CD8-positive, alpha-beta T cell (primary cell): ENCODE measurements at regions of chr19 and their contacts with region 1.

Region 1: GRCh38 chr19:36772311-36773222 is at the start of gene ZNF850:
- DNase-seq: peak; percentile 86 to 97 (median 95)
- ATAC-seq: peak; percentile 90
- H3K4me3 ChIP-seq: peak within 1 kb of the TSS; percentile 77 to 100
- H3K4me3 Mint-ChIP-seq: peak within 1 kb of the TSS; percentile 99
- H3K27ac ChIP-seq: peak within 1 kb of the TSS; percentile 85 to 89
- H3K27ac Mint-ChIP-seq: peak within 1 kb of the TSS; percentile 94
- H3K4me1 ChIP-seq: peaks cover 21% of the 10 kb centered on the region
- H3K4me1 Mint-ChIP-seq: peaks cover 23% of the 10 kb centered on the region
- H3K27me3 ChIP-seq: no peaks in the 10 kb centered on the region
- H3K27me3 Mint-ChIP-seq: no peaks in the 10 kb centered on the region
- CTCF ChIP-seq: no peak
- total RNA-seq, gene ZNF850: 1.5 to 2.7 TPM

Region 2: DNA sequence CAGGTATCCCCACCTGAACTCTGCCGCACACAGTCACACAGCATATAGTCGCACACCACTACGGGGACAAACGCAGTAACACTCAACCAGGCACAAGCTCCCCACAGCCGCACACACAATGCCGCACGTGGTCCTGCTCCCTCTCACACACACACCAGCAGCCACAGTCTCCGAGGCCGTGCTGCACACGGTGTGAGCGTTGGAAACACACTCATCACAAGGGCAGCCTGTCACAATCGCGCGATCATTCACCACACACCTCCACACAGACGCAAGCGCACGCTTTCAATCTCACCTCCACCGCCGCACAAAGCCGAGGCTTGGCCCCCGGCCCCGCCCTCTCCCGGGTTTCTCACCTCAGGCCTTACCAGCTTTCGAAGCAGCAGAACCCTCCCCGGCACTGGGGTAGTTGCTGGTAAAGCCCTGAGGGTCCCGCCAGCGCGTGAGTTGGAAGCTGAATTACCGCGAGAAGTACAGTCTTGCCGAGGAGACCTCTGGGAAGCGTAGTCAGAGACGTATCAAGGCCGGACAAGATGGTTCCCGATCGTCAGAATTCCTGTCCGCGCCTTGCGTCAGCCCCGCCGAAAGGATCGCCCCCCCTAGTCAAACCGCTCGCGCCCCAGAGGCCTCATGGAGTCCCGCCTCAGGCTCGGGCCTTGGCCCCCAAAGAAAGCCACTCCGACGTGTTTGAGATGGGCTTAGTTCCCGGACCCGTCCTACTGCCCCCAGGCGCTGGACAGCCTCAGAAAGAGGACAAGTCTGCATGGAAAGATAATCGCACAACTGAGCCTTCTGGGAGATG is 283.2 kb before region 1 on chr19 and contains the start of gene ZNF566:
- CTCF ChIA-PET with region 1: no interaction called
- POLR2A ChIA-PET with region 1: interaction called, 4 read pairs
- intact Hi-C with region 1: loop called (anchors 1 to 2 kb)
- DNase-seq: peak; percentile 84 to 98 (median 91)
- ATAC-seq: peak; percentile 88
- H3K4me3 ChIP-seq: peak within 1 kb of the TSS; percentile 84 to 93
- H3K4me3 Mint-ChIP-seq: peak within 1 kb of the TSS; percentile 99
- H3K27ac ChIP-seq: peak within 1 kb of the TSS; percentile 79 to 96
- H3K27ac Mint-ChIP-seq: peak within 1 kb of the TSS; percentile 96
- H3K4me1 ChIP-seq: peaks cover 6% of the 10 kb centered on the region
- H3K4me1 Mint-ChIP-seq: peaks cover 33% of the 10 kb centered on the region
- H3K27me3 ChIP-seq: no peaks in the 10 kb centered on the region
- H3K27me3 Mint-ChIP-seq: no peaks in the 10 kb centered on the region
- CTCF ChIP-seq: no peak
- total RNA-seq, gene ZNF566: 5.8 to 7.0 TPM

Region 3: DNA sequence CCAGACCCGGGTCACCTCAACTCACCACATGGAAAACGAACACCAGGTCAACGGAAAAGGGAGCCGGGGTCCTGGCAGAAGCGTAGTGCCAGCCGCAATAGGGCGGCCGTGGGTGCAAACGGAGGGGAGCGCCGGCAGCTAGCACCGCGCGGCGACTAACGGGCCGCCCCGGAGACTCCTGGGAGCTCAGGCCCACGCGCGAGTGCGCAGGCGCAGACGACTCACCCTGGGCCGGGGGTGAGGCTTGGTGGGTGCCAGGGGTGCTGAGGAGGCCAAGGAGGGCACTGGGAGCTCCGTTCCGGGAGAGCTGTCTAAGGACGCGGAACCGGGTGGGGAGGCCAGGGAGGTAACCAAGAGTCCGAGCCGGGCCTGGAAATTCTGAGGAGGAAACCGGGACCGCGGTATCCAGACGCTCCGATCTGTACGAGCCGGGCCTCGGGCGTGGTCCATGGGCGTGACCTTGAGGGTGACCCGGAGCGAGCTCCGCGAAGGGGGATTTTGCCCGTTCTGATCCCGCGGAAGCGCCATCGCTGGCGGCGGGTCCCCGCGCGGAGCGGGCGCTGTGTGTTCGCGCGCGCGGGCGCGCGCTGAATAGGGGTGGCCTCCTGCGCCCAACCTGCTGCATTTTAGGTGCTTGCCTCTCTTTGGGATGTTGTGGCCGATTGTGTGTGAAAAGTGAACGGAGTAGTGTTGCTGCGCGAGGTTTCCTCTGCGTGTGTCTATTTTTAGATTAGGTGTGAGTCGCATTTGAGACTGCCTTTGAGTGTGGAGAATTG is 167.3 kb before region 1 on chr19 and contains the start of gene ZNF382:
- CTCF ChIA-PET with region 1: no interaction called
- POLR2A ChIA-PET with region 1: interaction called, 3 read pairs
- intact Hi-C with region 1: loop called in 1 of 2 experiments (anchors 2 kb)
- DNase-seq: peak; percentile 72 to 91 (median 86)
- ATAC-seq: peak; percentile 65
- H3K4me3 ChIP-seq: peak within 1 kb of the TSS; percentile 89 to 95
- H3K4me3 Mint-ChIP-seq: peak within 1 kb of the TSS; percentile 91
- H3K27ac ChIP-seq: peak within 1 kb of the TSS; percentile 89 to 98
- H3K27ac Mint-ChIP-seq: peak within 1 kb of the TSS; percentile 97
- H3K4me1 ChIP-seq: peaks cover 11% of the 10 kb centered on the region
- H3K4me1 Mint-ChIP-seq: peaks cover 29% of the 10 kb centered on the region
- H3K27me3 ChIP-seq: no peaks in the 10 kb centered on the region
- H3K27me3 Mint-ChIP-seq: no peaks in the 10 kb centered on the region
- CTCF ChIP-seq: no peak
- total RNA-seq, gene ZNF382: 4.6 to 4.7 TPM

Region 4: GRCh38 chr19:36796076-36796992 is 23.8 kb after region 1 on chr19:
- CTCF ChIA-PET with region 1: no interaction called
- POLR2A ChIA-PET with region 1: interaction called, 6 read pairs
- intact Hi-C with region 1: loop called (anchors 1 kb)
- DNase-seq: no peak
- ATAC-seq: no peak
- H3K4me3 ChIP-seq: peak overlapping the region; percentile 92 to 97
- H3K4me3 Mint-ChIP-seq: peak overlapping the region; percentile 97
- H3K27ac ChIP-seq: peak overlapping the region; percentile 76 to 90
- H3K27ac Mint-ChIP-seq: peak overlapping the region; percentile 98
- H3K4me1 ChIP-seq: peaks cover 3% of the 10 kb centered on the region
- H3K4me1 Mint-ChIP-seq: peaks cover 21% of the 10 kb centered on the region
- H3K27me3 ChIP-seq: no peaks in the 10 kb centered on the region
- H3K27me3 Mint-ChIP-seq: peaks cover 6% of the 10 kb centered on the region
- CTCF ChIP-seq: no peak

Region 5: GRCh38 chr19:36915992-36916830 is 143.6 kb after region 1 on chr19 and contains the starts of genes ZNF568 and ZNF829:
- CTCF ChIA-PET with region 1: interaction called, 3 read pairs
- POLR2A ChIA-PET with region 1: no interaction called
- intact Hi-C with region 1: loop called (anchors 1 kb)
- DNase-seq: peak; percentile 82 to 97 (median 92)
- ATAC-seq: peak; percentile 97
- H3K4me3 ChIP-seq: peak within 1 kb of the TSS; percentile 75 to 79
- H3K4me3 Mint-ChIP-seq: peak within 1 kb of the TSS; percentile 89
- H3K27ac ChIP-seq: peak within 1 kb of the TSS; percentile 80 to 95
- H3K27ac Mint-ChIP-seq: peak within 1 kb of the TSS; percentile 95
- H3K4me1 ChIP-seq: peaks cover 10% of the 10 kb centered on the region
- H3K4me1 Mint-ChIP-seq: peaks cover 36% of the 10 kb centered on the region
- H3K27me3 ChIP-seq: no peaks in the 10 kb centered on the region
- H3K27me3 Mint-ChIP-seq: no peaks in the 10 kb centered on the region
- CTCF ChIP-seq: peak; percentile 91
- total RNA-seq, gene ZNF568: 4.6 to 5.5 TPM
- total RNA-seq, gene ZNF829: 6.1 to 6.2 TPM

Region 6: DNA sequence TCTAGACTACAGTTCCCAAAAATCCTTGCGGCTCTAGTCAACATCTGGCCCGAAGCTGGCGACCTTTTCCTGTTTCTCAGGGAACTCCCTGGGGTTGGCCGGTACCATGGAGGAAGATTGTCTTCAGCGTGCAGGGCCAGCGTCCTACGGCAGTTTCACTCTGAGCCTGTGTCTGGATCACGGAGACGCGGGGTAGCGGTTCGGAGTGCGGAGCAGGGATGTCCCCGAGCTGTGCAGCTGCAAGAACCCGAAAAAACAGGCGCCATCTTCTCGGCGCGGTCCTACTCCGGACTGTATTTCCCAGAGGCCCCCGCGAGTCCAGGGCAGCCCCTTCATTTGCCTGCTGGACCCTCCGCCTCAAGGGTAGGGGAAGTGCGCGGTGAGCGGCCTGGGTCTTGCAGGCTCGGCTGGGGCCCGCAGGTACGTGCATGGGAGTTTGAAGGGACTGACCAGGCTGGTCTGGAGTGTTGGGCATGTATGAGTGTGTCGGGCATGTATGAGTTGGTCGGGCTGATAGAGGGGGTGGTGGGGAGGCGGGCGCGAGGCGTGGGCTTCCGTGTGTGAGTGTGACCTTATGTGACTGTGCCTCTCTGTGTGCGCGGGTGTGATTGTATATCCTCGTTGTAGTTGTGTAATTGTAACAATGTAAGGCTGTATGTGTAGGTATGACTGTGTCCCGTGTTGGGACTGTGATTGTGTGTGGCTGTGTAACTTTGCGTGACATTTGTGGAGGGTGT is 445.5 kb after region 1 on chr19 and contains the start of gene ZNF383:
- CTCF ChIA-PET with region 1: no interaction called
- POLR2A ChIA-PET with region 1: no interaction called
- intact Hi-C with region 1: loop called (anchors 5 kb)
- DNase-seq: peak; percentile 68 to 92 (median 82)
- ATAC-seq: peak; percentile 88
- H3K4me3 ChIP-seq: peak within 1 kb of the TSS; percentile 71 to 92
- H3K4me3 Mint-ChIP-seq: peak within 1 kb of the TSS; percentile 87
- H3K27ac ChIP-seq: peak within 1 kb of the TSS; percentile 69 to 92
- H3K27ac Mint-ChIP-seq: peak within 1 kb of the TSS; percentile 93
- H3K4me1 ChIP-seq: peaks cover 11% of the 10 kb centered on the region
- H3K4me1 Mint-ChIP-seq: peaks cover 31% of the 10 kb centered on the region
- H3K27me3 ChIP-seq: no peaks in the 10 kb centered on the region
- H3K27me3 Mint-ChIP-seq: no peaks in the 10 kb centered on the region
- CTCF ChIP-seq: no peak
- total RNA-seq, gene ZNF383: 17.5 to 18.9 TPM